Activated CD4-positive, alpha-beta T cell treated with anti-CD3 and anti-CD28 coated beads, Interleukin-2, amount 10 ng/mL, durations not matched to agents 24 days and 14 days (primary cell): ENCODE measurements at regions of chr15 and their contacts with region 1.

Region 1: DNA sequence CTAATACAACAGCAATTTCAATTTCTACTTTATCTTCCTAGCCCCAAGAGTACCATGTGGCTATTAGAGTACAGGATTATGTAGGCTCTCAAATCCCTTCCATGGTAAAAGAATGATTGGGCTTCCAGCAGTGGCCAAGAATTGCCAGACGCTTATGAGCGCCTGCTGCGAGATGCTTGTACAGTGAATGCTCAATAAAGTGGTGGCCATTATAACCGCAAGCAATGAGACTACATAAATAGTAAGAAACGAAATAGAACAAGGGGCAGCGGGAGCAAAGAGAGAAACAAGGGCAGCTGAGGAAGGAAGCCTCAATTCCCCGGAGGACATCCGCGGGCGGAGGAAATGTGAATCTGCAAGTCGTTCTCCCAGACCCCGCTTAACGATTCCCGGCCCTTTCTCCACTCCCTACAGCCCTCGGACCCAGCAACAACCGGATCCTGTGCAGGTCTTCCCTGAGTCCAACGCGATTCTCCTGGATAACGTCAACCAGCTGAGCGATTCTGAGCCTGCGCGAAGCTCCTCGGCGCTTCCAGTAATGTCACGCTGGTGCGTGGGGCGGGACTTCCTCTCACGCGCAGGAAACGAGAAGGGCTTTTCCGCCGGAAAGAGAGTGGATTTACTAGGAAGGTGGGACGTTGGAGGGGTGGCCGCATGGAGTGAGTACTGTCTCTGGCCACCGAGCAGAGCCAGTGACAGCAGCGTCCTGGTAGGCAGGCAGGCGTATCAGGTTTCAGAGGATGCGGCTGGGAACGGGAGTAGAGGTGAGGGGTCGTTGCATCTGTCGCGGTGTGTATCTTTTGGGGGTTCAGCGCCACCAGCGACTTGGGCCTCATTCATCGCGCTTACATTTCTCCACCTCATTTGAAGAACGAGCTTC is 40.5 kb upstream of the AP3B2 start:
- DNase-seq: peak; percentile 96
- H3K4me3 Mint-ChIP-seq: peak overlapping the region; percentile 99
- H3K27ac Mint-ChIP-seq: peak overlapping the region; percentile 97
- H3K4me1 Mint-ChIP-seq: peaks cover 23% of the 10 kb centered on the region
- H3K27me3 Mint-ChIP-seq: no peaks in the 10 kb centered on the region

Region 2: DNA sequence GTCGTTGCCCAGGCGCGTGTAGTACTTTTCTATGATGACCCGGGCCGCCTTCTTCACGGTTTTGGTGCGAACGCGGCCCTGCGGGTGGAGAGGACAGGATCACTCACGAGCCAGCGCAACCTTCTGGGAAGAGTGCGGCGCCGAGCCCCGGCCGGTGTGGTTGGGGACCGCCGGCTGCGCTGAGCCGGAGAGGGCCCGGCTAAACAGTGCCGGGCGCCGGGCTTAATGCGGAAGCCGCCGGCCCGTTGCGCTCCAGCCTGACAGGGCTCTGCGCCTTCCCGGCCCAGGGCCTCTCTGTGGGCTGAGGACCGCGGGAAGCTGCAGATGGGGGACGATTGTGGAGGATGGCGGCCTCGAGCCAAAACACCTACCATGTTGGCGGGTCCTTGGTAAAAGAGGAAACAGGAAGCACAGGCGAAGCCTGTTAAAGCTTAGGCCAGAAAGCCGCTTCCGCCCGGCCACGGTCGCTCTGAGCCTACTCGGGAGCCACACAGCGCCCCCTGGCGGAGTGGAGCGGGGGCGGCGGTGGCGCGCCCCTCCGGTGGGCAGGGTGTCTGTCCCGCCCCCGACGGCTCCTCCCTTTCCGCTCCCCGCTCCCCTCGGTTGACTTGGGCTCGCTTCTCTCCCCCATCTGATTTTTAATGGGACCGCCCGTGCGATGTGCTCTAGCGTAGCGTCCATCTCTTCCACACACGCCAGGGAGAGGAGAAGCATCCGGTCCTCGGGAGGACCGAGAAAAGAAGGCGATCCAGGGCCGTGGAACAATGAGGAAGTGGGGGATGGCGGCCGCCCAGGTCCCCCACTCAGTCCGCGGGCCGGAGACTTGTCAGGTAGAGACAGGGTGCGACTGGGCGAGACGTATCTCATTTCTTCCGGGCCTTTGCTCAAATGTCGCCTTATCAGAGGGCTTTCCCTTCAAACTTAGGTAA is 209.9 kb before region 1 on chr15 and contains the start of gene RPS17:
- intact Hi-C with region 1: loop called (anchors 1 kb)
- DNase-seq: peak; percentile 100
- H3K4me3 Mint-ChIP-seq: peak within 1 kb of the TSS; percentile 86
- H3K27ac Mint-ChIP-seq: peak within 1 kb of the TSS; percentile 92
- H3K4me1 Mint-ChIP-seq: peaks cover 34% of the 10 kb centered on the region
- H3K27me3 Mint-ChIP-seq: peaks cover 9% of the 10 kb centered on the region
- total RNA-seq, gene RPS17: 2,675 and 2,728 TPM in 2 replicates

Region 3: DNA sequence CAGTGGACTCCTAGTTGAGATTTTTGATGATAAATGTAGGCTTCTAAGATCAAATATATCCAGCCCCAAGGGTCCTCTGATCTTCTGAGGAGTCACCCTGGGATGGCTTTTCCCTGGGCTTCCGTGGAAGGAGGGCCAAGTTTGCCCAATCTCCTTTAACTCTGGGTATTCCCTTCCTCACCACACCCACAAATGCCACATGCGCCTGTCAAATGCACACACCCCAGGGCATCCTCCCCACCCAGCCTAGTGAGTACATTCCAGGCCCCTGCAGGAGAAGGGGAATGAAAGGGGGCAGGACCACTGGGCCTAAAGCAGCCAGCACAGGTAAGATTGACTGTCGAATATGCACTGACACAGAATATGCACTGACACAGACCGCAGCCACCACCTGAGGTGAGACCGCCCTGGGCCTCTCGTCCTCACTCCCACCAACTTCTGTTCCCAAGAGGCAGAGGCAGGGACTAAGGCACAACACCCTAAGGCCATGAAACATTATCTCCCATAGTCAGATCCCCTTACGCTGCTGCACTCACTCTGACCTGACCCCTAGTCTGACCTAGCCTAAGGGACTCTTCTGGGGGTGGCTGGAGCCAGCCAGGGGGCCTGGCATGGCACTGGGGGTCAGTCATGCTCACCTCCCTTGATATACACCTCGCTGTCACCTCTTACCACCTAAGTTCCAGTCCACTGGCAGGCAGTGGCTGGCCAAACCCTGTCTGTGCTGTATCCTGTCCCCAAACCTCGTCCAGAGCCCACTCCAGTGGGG is 51.4 kb before region 1 on chr15:
- intact Hi-C with region 1: no loop called
- DNase-seq: no peak
- H3K4me3 Mint-ChIP-seq: no peak overlapping the region
- H3K27ac Mint-ChIP-seq: no peak overlapping the region
- H3K4me1 Mint-ChIP-seq: no peaks in the 10 kb centered on the region
- H3K27me3 Mint-ChIP-seq: no peaks in the 10 kb centered on the region

Region 4: GRCh38 chr15:82709421-82710207 is 40.6 kb before region 1 on chr15 and contains the start of gene AP3B2:
- intact Hi-C with region 1: loop called (anchors 1 kb)
- DNase-seq: peak; percentile 93
- H3K4me3 Mint-ChIP-seq: peak within 1 kb of the TSS; percentile 65
- H3K27ac Mint-ChIP-seq: no peak within 1 kb of the TSS
- H3K4me1 Mint-ChIP-seq: no peaks in the 10 kb centered on the region
- H3K27me3 Mint-ChIP-seq: peaks cover 6% of the 10 kb centered on the region
- total RNA-seq, gene AP3B2: not detected in 2 replicates